ENCODE measurements at regions of chr2 and their contacts with region 1.

Region 1: GRCh38 chr2:218659258-218659987 is at the starts of genes BCS1L and ZNF142:
- DNase-seq: peak; percentile 97
- ATAC-seq: peak; percentile 97
- H3K4me3 Mint-ChIP-seq: peak within 1 kb of the TSS; percentile 90
- H3K27ac Mint-ChIP-seq: peak within 1 kb of the TSS; percentile 86
- H3K4me1 Mint-ChIP-seq: peaks cover 38% of the 10 kb centered on the region
- H3K27me3 Mint-ChIP-seq: no peaks in the 10 kb centered on the region
- total RNA-seq, gene BCS1L: 55.2 to 67.6 TPM
- total RNA-seq, gene ZNF142: 54.2 to 55.4 TPM

Region 2: DNA sequence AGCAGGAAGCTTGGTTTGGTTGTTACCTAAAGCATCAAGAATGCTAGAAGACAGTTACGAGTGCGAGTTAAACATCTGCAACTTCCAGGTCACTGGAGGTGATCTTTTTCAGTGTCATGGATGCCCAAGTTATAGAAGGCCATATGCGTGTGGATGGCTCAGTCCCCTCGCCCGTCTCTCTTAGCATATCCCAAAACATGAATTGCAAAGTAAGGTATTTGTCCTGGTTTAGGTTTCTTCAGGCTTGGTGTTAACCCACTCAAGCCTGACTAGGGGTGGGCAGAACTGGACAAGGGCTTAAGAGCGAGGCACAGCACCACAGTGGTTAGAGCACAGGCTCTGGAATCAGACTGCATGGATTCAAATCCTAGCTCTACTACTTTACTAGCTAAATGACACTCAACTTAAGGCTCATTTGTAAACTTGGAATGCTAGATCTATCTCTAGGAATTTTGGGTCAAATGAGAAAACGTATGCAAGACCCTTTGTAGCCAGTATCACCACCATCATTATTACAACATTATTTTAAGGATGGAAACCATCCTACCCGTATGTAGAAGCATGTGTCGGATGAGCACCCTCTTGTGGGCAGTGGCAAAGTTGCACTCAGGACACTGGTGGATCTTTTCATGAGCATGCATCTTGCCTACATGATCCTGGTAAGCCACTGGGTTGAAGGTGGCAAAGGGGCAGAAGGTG is 11.2 kb before region 1 on chr2:
- CTCF ChIA-PET with region 1: interaction called, 40 read pairs
- DNase-seq: peak; percentile 72
- ATAC-seq: peak; percentile 81
- H3K4me3 Mint-ChIP-seq: no peak overlapping the region
- H3K27ac Mint-ChIP-seq: no peak overlapping the region
- H3K4me1 Mint-ChIP-seq: peaks cover 4% of the 10 kb centered on the region
- H3K27me3 Mint-ChIP-seq: no peaks in the 10 kb centered on the region

Region 3: GRCh38 chr2:218671654-218672566 is 12.5 kb after region 1 on chr2 and contains the starts of genes RNF25 and STK36:
- CTCF ChIA-PET with region 1: interaction called, 31 read pairs
- DNase-seq: peak; percentile 89
- ATAC-seq: peak; percentile 97
- H3K4me3 Mint-ChIP-seq: peak within 1 kb of the TSS; percentile 98
- H3K27ac Mint-ChIP-seq: peak within 1 kb of the TSS; percentile 91
- H3K4me1 Mint-ChIP-seq: peaks cover 24% of the 10 kb centered on the region
- H3K27me3 Mint-ChIP-seq: no peaks in the 10 kb centered on the region
- total RNA-seq, gene RNF25: 22.0 to 25.7 TPM
- total RNA-seq, gene STK36: 16.8 to 22.4 TPM

Region 4: GRCh38 chr2:218691234-218691633 is 31.8 kb after region 1 on chr2:
- CTCF ChIA-PET with region 1: interaction called, 15 read pairs
- DNase-seq: no peak
- ATAC-seq: no peak
- H3K4me3 Mint-ChIP-seq: no peak overlapping the region
- H3K27ac Mint-ChIP-seq: no peak overlapping the region
- H3K4me1 Mint-ChIP-seq: no peaks in the 10 kb centered on the region
- H3K27me3 Mint-ChIP-seq: no peaks in the 10 kb centered on the region

Region 5: GRCh38 chr2:218710687-218711549 is 51.5 kb after region 1 on chr2 and contains the start of gene TTLL4:
- CTCF ChIA-PET with region 1: interaction called, 24 read pairs
- DNase-seq: peak; percentile 98
- ATAC-seq: peak; percentile 95
- H3K4me3 Mint-ChIP-seq: peak within 1 kb of the TSS; percentile 90
- H3K27ac Mint-ChIP-seq: peak within 1 kb of the TSS; percentile 80
- H3K4me1 Mint-ChIP-seq: peaks cover 52% of the 10 kb centered on the region
- H3K27me3 Mint-ChIP-seq: peaks cover 7% of the 10 kb centered on the region
- total RNA-seq, gene TTLL4: 39.6 to 40.4 TPM